Activated naive CD4-positive, alpha-beta T cell treated with anti-CD3 and anti-CD28 coated beads, Interleukin-2, amount 10 ng/mL, durations not matched to agents 7 days and 5 days (primary cell): ENCODE measurements at regions of chr1 and their contacts with region 1.

Region 1: DNA sequence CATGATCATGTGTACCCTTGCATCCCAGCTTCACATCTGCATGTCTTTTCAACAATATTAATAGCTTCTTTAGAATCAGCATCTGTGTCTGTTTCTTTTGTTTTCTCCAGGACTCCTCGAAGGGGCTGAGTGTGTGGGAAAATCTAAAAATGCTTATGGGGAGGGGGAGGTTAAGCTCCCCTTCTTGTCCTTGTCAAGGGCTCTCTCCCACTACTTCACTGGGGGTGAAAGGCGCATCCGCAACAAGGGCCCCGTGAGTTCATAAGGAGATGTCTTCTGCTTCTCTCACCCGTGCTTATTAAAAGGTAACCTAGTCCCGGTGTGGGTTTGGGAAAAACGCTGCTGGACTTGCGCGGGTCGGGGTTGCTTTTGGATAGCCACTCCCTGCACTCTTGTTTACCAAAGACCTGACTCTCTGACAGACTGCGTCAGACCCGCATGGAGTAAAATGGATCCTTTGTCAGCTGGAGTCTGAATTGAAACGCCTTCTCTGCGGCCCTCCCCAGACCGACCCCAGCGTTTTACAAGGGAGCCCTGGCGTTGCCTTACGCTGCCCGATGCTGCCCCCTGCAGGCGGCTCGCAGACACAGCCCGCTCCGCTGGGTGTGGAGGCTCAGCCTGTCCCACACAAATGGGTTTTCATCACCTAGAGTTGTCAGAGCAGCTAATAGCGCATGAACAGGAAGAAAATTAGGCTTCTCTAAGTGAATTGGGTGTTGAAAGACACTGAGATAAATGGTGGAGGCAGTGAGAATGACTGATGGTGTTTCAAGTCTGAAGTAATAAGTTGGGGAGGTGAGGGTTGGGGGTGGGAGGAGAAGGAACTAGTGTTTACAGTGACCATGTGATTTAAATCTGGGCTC is 53.8 kb downstream of the IER5 start:
- DNase-seq: peak; percentile 91
- H3K4me3 Mint-ChIP-seq: no peak overlapping the region
- H3K27ac Mint-ChIP-seq: peak overlapping the region; percentile 63
- H3K4me1 Mint-ChIP-seq: peaks cover 59% of the 10 kb centered on the region
- H3K27me3 Mint-ChIP-seq: peaks cover 38% of the 10 kb centered on the region

Region 2: GRCh38 chr1:180881806-180882509 is 260.4 kb before region 1 on chr1:
- CTCF ChIA-PET with region 1: interaction called, 47 read pairs
- DNase-seq: no peak
- H3K4me3 Mint-ChIP-seq: no peak overlapping the region
- H3K27ac Mint-ChIP-seq: no peak overlapping the region
- H3K4me1 Mint-ChIP-seq: no peaks in the 10 kb centered on the region
- H3K27me3 Mint-ChIP-seq: no peaks in the 10 kb centered on the region

Region 3: DNA sequence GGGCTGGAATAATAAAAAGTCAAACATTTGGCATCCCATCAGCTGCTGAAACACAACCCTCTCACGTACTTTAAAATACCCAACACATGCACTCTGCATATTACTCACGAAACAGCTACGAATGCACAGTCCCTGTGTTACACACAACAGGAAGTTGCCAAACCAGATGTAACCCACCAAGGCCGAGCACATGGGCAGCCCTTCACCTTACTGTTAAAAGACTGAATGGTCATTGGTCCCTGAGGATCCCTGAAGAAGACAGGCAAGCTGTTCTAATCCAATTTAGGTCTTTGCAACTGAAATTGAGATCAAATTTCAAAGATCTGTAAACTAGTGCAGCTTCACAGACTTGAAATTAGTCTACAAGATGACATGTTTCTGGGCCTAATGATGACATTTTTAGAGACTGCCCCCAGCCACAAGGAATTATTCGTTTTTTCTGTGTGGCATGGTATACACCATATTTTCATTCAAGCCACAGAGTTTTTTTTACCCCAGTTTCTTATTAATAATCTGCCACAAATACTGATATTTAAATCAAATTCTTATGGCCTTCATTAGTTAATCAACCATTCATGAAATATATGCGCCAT is 79.4 kb before region 1 on chr1:
- CTCF ChIA-PET with region 1: interaction called, 11 read pairs
- DNase-seq: peak; percentile 43
- H3K4me3 Mint-ChIP-seq: peak overlapping the region; percentile 21
- H3K27ac Mint-ChIP-seq: peak overlapping the region; percentile 86
- H3K4me1 Mint-ChIP-seq: peaks cover 26% of the 10 kb centered on the region
- H3K27me3 Mint-ChIP-seq: peaks cover 4% of the 10 kb centered on the region

Region 4: GRCh38 chr1:181088079-181089016 is 54.0 kb before region 1 on chr1 and contains the start of gene IER5:
- CTCF ChIA-PET with region 1: interaction called, 120 read pairs
- DNase-seq: peak; percentile 97
- H3K4me3 Mint-ChIP-seq: peak within 1 kb of the TSS; percentile 100
- H3K27ac Mint-ChIP-seq: peak within 1 kb of the TSS; percentile 99
- H3K4me1 Mint-ChIP-seq: peaks cover 52% of the 10 kb centered on the region
- H3K27me3 Mint-ChIP-seq: peaks cover 18% of the 10 kb centered on the region

Region 5: DNA sequence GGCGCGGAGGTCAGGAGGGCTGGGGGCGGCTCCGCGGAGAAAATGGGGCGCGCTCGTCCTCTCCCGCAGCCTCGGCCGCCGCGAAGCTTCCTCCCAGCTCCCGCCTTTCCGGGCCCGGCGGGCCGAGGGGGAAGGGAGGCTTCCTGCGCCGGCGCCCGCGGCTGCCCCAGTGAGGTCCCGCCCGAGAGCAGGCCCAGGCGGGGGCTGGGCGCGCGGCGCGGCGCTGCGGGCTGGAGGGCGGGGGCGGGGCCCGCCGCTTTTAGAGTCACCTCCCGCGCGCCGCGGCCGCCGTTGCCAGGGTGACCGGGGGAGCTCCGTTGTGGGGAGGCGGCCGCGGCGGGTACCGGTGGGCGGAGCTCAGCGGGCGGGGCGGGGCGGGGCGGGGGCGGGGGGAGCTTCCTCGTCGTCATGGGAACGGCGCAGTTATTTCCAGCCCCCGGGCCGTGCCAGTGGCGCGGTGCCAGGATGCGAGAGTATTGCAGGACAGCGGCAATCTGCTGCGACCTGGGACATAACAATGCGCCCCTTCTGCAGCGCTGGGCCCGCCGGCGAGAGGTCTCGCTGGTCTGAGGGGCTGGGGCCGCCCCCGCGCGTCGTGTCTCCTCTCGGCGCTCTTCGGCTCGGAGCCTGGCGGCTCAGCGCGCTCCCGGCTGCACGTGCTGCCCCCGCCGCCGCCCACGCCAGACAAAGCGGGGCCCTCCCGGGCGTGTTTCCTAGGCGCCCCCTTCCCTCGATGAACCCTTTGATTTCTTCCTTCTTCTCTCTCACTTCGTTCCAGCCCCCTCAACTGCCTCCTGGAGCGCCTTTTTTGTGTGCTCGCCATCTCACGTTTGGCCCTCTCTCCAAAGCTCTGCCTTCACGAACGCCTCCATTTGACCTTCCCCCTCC is 36.9 kb before region 1 on chr1:
- CTCF ChIA-PET with region 1: interaction called, 59 read pairs
- DNase-seq: peak; percentile 94
- H3K4me3 Mint-ChIP-seq: peak overlapping the region; percentile 79
- H3K27ac Mint-ChIP-seq: peak overlapping the region; percentile 1
- H3K4me1 Mint-ChIP-seq: peaks cover 70% of the 10 kb centered on the region
- H3K27me3 Mint-ChIP-seq: peaks cover 55% of the 10 kb centered on the region

Region 6: DNA sequence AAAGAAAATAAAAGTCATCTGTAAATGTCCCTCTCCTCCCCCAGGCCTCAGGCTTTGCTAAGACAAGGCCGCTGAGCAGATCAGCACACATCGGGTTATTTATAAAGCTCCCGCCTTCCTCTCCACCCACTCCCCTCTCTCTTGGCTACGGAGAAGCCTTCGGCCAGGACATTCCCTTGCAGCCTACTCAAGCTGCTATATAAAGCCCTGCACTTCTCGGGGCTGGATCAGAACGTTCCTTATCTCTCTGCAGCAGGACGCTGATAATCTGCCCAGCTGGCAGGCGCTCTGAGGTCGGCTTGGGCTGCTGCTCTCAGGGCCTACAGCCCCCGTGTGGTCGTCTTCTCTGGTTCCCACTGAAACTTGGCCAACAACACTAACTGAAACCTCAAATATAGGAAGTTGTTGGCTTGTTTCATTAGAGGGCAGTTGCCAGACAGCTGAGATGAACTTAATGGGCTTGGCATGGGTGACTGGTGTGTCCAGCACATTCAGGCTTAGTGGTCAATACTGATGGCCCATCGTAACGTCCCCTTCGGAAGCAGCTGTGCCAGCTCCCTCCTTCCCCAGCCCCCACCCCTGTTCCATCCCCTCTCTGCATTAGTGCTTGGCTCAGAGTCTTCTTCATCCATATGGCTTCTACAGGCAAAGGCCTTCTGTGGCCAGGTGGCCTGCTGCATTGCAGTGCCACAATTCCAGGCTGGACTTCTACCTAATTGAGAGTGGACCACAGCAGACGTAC is 10.7 kb after region 1 on chr1:
- CTCF ChIA-PET with region 1: interaction called, 13 read pairs
- DNase-seq: no peak
- H3K4me3 Mint-ChIP-seq: no peak overlapping the region
- H3K27ac Mint-ChIP-seq: no peak overlapping the region
- H3K4me1 Mint-ChIP-seq: peaks cover 44% of the 10 kb centered on the region
- H3K27me3 Mint-ChIP-seq: peaks cover 26% of the 10 kb centered on the region

Region 7: GRCh38 chr1:181166377-181167196 is 24.3 kb after region 1 on chr1:
- CTCF ChIA-PET with region 1: interaction called, 46 read pairs
- DNase-seq: peak; percentile 84
- H3K4me3 Mint-ChIP-seq: no peak overlapping the region
- H3K27ac Mint-ChIP-seq: peak overlapping the region; percentile 21
- H3K4me1 Mint-ChIP-seq: peaks cover 7% of the 10 kb centered on the region
- H3K27me3 Mint-ChIP-seq: peaks cover 51% of the 10 kb centered on the region